ENCODE measurements at regions of chr14 and their contacts with region 1.

Region 1: DNA sequence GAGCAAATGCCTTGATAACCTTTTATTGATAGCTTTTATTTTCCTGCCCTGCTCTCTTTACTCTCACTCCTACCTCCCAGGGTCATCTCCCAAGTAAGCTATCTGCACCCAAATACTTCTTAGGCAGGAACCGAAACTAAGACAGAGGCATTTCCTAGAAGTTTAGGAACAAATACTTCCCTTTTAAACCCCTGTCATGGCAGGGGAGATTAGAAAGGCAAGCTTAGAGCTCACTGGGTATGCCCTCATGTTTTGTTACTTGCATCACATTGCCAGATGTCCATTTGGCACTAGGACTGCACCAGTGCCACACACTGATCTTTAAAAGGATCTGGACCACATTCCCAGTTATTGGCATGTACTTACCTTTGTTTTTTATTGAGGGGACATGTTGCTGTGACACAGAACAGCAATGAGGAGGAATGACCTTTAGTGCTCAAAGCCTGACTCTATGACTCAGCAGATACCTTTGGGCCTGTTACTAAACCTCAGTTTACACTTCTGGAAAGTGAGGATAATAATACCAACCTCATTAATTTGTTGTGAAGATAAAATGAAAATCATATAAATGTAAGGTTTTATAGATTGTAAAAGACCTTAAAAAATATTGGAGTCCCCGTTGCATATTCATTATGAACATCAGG is 40.9 kb upstream of the MBIP start:
- DNase-seq: no peak
- H3K4me3 ChIP-seq: no peak overlapping the region
- H3K27ac ChIP-seq: no peak overlapping the region
- H3K4me1 ChIP-seq: no peaks in the 10 kb centered on the region
- CTCF ChIP-seq: no peak

Region 2: GRCh38 chr14:36217732-36218131 is 143.6 kb before region 1 on chr14:
- CTCF ChIA-PET with region 1: no interaction called
- POLR2A ChIA-PET with region 1: no interaction called
- intact Hi-C with region 1: loop called (anchors 10 kb)
- DNase-seq: no peak
- H3K4me3 ChIP-seq: no peak overlapping the region
- H3K27ac ChIP-seq: no peak overlapping the region
- H3K4me1 ChIP-seq: no peaks in the 10 kb centered on the region
- CTCF ChIP-seq: no peak

Region 3: DNA sequence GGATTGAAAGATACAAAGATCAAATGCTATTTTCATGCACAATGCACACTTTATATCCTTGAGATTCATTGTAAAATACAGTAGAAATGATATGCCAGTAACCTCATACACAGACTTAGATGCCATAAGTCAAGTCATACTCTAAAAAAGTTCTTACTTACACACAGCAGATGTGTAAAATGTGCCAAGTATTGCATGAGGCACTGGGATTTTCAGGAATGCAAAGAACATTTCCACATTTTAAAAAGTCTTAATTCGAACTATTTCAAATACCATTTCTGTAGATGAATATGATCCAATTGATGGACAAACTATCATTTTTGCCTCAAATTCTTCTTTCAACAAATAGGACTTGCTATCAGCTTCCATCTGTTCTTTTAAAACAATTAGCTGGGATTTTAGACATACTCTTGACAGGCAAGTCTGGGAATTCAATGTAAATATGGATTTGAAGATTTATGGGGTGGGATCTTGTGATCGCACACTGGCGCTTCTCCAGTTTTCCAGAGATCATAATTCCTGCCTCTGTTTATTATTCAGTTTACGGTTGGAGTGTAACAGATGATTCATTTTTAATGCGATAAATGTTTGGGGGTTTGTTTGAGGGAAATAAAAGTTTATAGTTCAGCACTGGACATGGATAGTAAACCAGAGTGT is 484.2 kb after region 1 on chr14:
- CTCF ChIA-PET with region 1: no interaction called
- POLR2A ChIA-PET with region 1: no interaction called
- intact Hi-C with region 1: no loop called
- DNase-seq: no peak
- H3K4me3 ChIP-seq: no peak overlapping the region
- H3K27ac ChIP-seq: no peak overlapping the region
- H3K4me1 ChIP-seq: no peaks in the 10 kb centered on the region
- CTCF ChIP-seq: no peak